Endothelial cell of umbilical vein (primary cell): ENCODE measurements at regions of chr3 and their contacts with region 1.

Region 1: DNA sequence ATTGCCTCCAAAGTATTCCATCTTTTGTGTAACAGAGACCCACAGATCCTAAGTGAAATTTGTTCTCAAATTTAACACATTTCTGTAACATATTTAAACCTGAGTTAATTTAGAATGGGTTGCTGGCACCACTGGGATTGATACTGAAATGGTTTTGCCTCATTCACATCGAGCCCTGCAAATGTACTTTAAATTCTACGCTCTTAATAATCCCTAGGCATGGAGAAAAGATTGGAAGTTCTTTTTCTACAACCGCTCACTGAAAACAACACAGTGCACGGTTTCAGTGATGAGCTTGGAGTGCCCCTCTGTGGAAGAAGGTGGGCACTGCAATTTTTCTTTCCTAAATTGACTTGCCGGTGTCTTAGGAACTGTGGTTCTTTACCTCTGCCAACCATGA is 109.9 kb upstream of the ATP11B start:
- DNase-seq: peak; percentile 84
- H3K4me3 ChIP-seq: peak overlapping the region in 1 of 3 experiments; percentile 80
- H3K27ac ChIP-seq: no peak overlapping the region
- H3K4me1 ChIP-seq: peaks cover 10% of the 10 kb centered on the region
- H3K27me3 ChIP-seq: peaks cover 0 to 6% of the 10 kb centered on the region in 2 experiments
- CTCF ChIP-seq: peak; percentile 76 to 91
- POLR2A ChIP-seq: no peak

Region 2: DNA sequence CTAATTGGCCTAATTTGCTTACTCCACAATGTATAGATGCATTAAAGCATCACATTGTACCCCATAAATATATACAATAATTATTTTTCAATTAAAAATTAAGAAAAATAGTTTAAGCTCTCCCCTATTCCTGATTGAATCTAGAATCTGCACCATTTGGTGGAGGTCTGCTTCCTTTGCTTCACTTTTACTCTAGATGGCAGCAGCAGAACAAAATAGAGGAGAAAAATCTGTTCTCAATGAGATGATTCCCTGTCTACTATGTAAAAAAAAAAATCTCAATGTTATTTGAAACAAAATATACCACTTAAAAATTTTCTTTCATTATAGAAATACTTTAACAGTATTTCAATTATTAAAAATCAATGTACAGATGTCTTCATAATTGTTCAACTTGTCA is 1880.6 kb before region 1 on chr3:
- CTCF ChIA-PET with region 1: interaction called, 3 read pairs
- POLR2A ChIA-PET with region 1: no interaction called
- dilution Hi-C with region 1: no loop called
- intact Hi-C with region 1: loop called (anchors 5 kb)
- DNase-seq: peak; percentile 25
- H3K4me3 ChIP-seq: no peak overlapping the region
- H3K27ac ChIP-seq: no peak overlapping the region
- H3K4me1 ChIP-seq: peaks cover 4% of the 10 kb centered on the region
- H3K27me3 ChIP-seq: no peaks in the 10 kb centered on the region
- CTCF ChIP-seq: peak; percentile 7 to 28
- POLR2A ChIP-seq: no peak

Region 3: GRCh38 chr3:181326637-181327223 is 1356.7 kb before region 1 on chr3:
- CTCF ChIA-PET with region 1: interaction called, 27 read pairs
- POLR2A ChIA-PET with region 1: no interaction called
- dilution Hi-C with region 1: no loop called
- intact Hi-C with region 1: loop called (anchors 1 kb)
- DNase-seq: peak; percentile 54
- H3K4me3 ChIP-seq: no peak overlapping the region
- H3K27ac ChIP-seq: no peak overlapping the region
- H3K4me1 ChIP-seq: no peaks in the 10 kb centered on the region
- H3K27me3 ChIP-seq: no peaks in the 10 kb centered on the region
- CTCF ChIP-seq: peak; percentile 54 to 58
- POLR2A ChIP-seq: no peak

Region 4: GRCh38 chr3:181623924-181624694 is 1059.3 kb before region 1 on chr3:
- CTCF ChIA-PET with region 1: no interaction called
- POLR2A ChIA-PET with region 1: no interaction called
- dilution Hi-C with region 1: no loop called
- intact Hi-C with region 1: loop called (anchors 5 kb)
- DNase-seq: peak; percentile 81
- H3K4me3 ChIP-seq: peak overlapping the region in 1 of 3 experiments; percentile 26
- H3K27ac ChIP-seq: peak overlapping the region; percentile 88
- H3K4me1 ChIP-seq: peaks cover 42% of the 10 kb centered on the region
- H3K27me3 ChIP-seq: no peaks in the 10 kb centered on the region
- CTCF ChIP-seq: no peak
- POLR2A ChIP-seq: no peak

Region 5: GRCh38 chr3:181879926-181880730 is 803.3 kb before region 1 on chr3:
- CTCF ChIA-PET with region 1: no interaction called
- POLR2A ChIA-PET with region 1: no interaction called
- dilution Hi-C with region 1: no loop called
- intact Hi-C with region 1: loop called (anchors 5 kb)
- DNase-seq: peak; percentile 65
- H3K4me3 ChIP-seq: no peak overlapping the region
- H3K27ac ChIP-seq: peak overlapping the region; percentile 26
- H3K4me1 ChIP-seq: peaks cover 6% of the 10 kb centered on the region
- H3K27me3 ChIP-seq: no peaks in the 10 kb centered on the region
- CTCF ChIP-seq: no peak
- POLR2A ChIP-seq: no peak

Region 6: GRCh38 chr3:182258538-182259177 is 424.8 kb before region 1 on chr3:
- CTCF ChIA-PET with region 1: interaction called, 5 read pairs
- POLR2A ChIA-PET with region 1: no interaction called
- dilution Hi-C with region 1: no loop called
- intact Hi-C with region 1: loop called (anchors 2 kb)
- DNase-seq: peak; percentile 40
- H3K4me3 ChIP-seq: no peak overlapping the region
- H3K27ac ChIP-seq: no peak overlapping the region
- H3K4me1 ChIP-seq: no peaks in the 10 kb centered on the region
- H3K27me3 ChIP-seq: no peaks in the 10 kb centered on the region
- CTCF ChIP-seq: peak; percentile 22 to 37
- POLR2A ChIP-seq: no peak

Region 7: DNA sequence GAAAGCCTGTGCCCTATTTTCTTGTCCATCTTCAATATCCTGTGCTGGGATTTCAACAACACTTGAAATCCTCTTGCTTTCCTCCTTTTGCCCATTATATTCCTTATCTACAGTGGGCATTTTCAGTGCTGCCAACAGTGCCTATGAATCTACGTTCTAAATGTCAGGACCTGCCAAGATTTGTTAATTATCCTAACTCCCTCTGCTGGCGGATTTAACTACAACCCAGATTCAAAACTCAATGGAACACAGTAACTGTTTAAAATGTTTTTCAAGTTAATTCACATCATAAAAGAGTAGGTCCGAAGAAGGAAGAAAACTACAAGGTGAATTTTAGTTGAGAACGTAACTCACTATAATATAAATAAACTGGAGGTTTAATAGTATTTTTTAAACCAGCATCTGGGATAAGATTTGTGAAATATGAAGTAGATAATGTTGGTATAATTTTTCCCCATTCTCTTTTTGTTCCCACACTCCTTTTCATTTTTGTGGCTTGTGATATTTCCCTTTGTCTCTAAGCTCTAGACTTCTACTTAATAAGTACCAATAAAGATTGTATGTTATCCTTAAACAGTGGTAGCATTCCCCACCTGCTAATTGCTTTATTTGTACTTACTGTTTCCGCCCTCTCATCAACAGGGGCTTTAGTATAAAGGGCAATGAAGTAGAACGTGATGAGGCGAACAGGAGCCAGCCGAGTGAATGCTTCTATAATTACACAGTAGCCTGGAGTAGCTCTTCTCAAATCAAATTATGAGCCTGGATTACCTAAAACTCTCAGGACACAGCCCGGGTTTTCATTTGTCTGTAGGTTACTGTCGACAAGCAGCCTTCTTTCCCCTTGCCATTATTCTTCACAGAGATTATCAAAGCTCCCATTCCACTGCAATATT is 192.6 kb before region 1 on chr3:
- CTCF ChIA-PET with region 1: no interaction called
- POLR2A ChIA-PET with region 1: no interaction called
- dilution Hi-C with region 1: no loop called
- intact Hi-C with region 1: loop called (anchors 2 kb)
- DNase-seq: peak; percentile 54
- H3K4me3 ChIP-seq: no peak overlapping the region
- H3K27ac ChIP-seq: no peak overlapping the region
- H3K4me1 ChIP-seq: no peaks in the 10 kb centered on the region
- H3K27me3 ChIP-seq: no peaks in the 10 kb centered on the region
- CTCF ChIP-seq: peak; percentile 24 to 36
- POLR2A ChIP-seq: no peak

Region 8: DNA sequence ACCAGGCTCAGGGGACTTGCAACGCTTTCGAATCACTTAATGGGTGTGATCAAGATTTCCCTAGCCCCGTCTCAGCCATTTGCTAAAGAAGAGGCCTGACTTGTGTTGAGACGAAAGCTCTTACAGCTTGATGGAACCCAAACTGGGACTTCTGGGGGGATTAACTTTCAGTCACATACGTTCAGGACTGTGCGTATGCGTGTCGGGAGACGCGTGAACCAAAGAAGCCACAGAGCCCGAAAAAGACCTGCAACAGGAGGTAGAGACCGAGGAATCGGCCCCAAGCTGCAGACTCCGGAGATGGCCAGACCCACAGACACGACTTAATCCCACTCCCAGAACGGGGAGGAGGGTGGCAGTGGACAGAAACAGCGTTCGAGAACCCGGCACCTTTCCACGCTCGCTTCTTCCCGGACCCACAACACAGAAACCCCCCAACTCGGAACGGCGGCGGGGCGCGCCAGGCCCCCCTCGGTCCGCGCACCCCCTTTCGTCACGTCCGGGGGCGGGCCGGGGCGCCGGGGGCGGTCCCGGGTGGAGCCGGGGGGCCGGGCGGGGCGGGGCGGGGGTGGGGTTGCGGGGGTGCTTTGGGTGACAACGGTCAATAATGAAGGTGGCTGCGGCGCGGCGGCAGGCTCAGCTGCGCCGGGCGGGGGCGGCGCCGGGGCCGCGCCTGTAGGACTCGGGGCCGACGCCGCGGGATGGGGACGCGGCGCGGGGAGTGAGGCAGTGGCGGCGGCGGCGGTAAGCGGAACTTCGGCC is 109.6 kb after region 1 on chr3 and contains the start of gene ATP11B:
- CTCF ChIA-PET with region 1: no interaction called
- POLR2A ChIA-PET with region 1: no interaction called
- dilution Hi-C with region 1: no loop called
- intact Hi-C with region 1: no loop called
- DNase-seq: peak; percentile 79
- H3K4me3 ChIP-seq: peak within 1 kb of the TSS; percentile 69 to 90 (median 74)
- H3K27ac ChIP-seq: peak within 1 kb of the TSS; percentile 74
- H3K4me1 ChIP-seq: peaks cover 32% of the 10 kb centered on the region
- H3K27me3 ChIP-seq: no peaks in the 10 kb centered on the region
- CTCF ChIP-seq: no peak
- POLR2A ChIP-seq: peak; percentile 80
- total RNA-seq, gene ATP11B: 49.3 and 62.3 TPM in 2 replicates